Ascending aorta (tissue), 2 donors: ENCODE measurements at regions of chr15 and their contacts with region 1.

Region 1: DNA sequence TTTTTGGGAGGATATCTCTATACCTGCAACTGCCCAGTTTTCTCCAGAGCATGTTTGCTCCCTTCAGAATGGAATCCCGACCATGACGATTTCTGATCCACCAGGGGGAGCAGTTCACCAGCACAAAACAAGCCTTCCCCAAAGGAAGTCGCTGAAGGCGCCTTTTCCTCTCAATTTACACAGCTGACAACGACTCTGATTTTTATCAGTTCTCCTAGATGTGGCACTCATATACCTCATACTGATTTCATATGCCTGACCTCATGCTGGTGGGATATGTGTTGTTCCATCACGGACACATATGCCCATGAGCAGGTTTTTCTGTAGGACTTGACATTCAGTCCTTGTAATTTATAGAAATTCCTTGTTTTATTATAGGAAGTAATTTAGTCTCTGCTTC is 1028.2 kb downstream of the MCTP2 start:
- DNase-seq: peak in 1 of 2 donors; percentile 82
- H3K4me3 ChIP-seq: peak overlapping the region in 1 of 2 donors; percentile 37
- H3K27ac ChIP-seq: peak overlapping the region; percentile 73 to 88
- H3K4me1 ChIP-seq: peaks cover 0 to 29% of the 10 kb centered on the region in 2 donors
- H3K27me3 ChIP-seq: no peaks in the 10 kb centered on the region
- CTCF ChIP-seq: peak; percentile 60 to 81 (median 68)

Region 2: DNA sequence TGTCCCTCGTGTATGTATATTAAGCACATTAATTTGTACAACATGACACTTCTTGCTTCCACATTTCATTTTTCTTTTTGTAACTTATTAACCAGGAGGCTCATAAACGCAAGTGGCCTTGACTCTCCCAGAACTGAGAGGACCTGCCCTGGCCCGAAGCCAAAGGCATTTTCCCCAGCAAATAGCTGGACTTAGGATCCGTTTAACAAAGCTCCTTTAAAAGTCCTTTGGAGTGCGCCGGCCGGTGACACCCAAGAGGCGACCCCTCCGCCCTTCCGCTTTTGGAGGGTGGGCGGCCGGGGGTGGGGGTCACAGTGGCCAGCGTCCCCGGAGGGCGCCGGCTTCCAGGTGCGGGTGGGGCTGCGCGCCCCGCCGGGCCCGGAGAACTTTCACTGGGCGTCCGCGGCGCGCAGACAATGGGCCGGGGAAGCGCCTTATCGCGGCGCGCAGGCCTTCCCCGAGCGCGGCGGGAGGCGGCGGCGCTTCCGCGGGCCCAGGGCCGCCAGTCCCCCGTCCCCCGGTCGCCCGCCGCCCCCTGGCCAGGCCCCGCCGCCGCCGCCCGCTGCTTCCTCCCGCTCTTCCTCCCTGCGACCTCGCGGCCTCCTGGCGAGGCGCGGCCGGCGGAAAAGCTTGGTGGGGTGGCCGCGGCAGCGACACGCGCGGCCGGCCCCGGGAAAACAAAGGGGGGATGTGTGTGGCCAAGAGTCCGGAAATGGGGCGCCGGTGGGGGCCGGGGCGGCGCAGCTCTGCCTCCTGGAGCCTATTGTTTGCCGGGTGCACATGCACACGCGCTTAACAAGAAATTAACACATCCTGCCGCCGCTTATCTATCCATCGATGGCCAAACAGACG is 414.7 kb before region 1 on chr15:
- intact Hi-C with region 1: loop called (anchors 10 kb)
- DNase-seq: peak in 1 of 2 donors; percentile 77
- H3K4me3 ChIP-seq: peak overlapping the region; percentile 53 to 69
- H3K27ac ChIP-seq: peak overlapping the region; percentile 88 to 92
- H3K4me1 ChIP-seq: peaks cover 5 to 22% of the 10 kb centered on the region in 2 donors
- H3K27me3 ChIP-seq: no peaks in the 10 kb centered on the region
- CTCF ChIP-seq: peak in 2 of 3 experiments; percentile 15 to 37

Region 3: DNA sequence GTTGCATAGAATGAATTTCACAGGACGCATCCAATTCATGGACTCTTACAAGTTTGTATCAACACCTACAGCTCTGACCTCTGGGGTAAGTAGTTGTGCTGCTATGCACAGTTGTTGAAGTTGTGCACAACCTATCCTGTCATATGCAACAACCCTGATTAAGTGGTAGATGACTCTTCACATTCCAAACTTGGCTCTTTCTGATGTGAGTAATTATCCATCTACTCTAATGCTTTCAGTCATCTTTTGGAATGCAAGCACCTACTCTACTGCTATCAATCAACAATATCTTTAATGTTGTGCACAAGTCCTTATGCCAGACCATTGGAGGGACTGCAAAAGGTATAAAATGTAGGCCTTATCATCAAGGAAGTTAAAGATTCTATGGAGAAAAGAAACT is 106.8 kb before region 1 on chr15:
- intact Hi-C with region 1: no loop called
- DNase-seq: no peak
- H3K4me3 ChIP-seq: no peak overlapping the region
- H3K27ac ChIP-seq: no peak overlapping the region
- H3K4me1 ChIP-seq: no peaks in the 10 kb centered on the region
- H3K27me3 ChIP-seq: no peaks in the 10 kb centered on the region
- CTCF ChIP-seq: no peak

Region 4: DNA sequence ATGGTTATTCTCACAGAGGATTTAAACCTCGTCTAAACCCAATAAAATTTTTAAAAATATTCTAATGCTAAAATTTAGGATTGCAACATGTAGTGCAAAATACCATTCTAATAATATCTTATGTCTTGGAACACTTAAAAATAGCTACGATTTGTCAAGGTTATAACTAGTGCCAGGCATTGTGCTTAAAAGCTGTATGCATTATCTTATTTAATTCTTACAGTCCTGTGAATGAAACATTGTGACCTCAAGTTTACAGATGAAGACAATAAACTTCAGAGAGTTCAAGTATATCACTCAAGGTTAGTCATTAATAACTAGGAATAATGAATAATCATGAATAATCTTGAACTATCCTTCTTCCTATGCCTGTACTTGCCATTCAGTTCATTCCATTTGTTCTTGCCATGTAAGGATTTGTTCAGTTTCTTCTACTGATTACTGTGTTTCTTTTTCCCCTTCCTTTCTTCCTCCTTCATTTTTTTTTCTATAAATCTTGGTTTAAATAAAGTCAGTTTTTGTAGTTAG is 173.4 kb after region 1 on chr15:
- intact Hi-C with region 1: loop called (anchors 5 kb)
- DNase-seq: no peak
- H3K4me3 ChIP-seq: peak overlapping the region in 1 of 2 donors; percentile 4
- H3K27ac ChIP-seq: peak overlapping the region; percentile 82
- H3K4me1 ChIP-seq: peaks cover 7 to 14% of the 10 kb centered on the region in 2 donors
- H3K27me3 ChIP-seq: no peaks in the 10 kb centered on the region
- CTCF ChIP-seq: no peak

Region 5: GRCh38 chr15:95839367-95839782 is 579.9 kb after region 1 on chr15:
- intact Hi-C with region 1: loop called (anchors 1 kb)
- DNase-seq: no peak
- H3K4me3 ChIP-seq: no peak overlapping the region
- H3K27ac ChIP-seq: peak overlapping the region; percentile 51 to 94
- H3K4me1 ChIP-seq: peaks cover 0 to 4% of the 10 kb centered on the region in 2 donors
- H3K27me3 ChIP-seq: no peaks in the 10 kb centered on the region
- CTCF ChIP-seq: no peak

Region 6: GRCh38 chr15:96047255-96047931 is 787.9 kb after region 1 on chr15:
- intact Hi-C with region 1: loop called (anchors 10 kb)
- DNase-seq: peak in 1 of 2 donors; percentile 70
- H3K4me3 ChIP-seq: peak overlapping the region; percentile 12 to 14
- H3K27ac ChIP-seq: peak overlapping the region; percentile 17 to 36
- H3K4me1 ChIP-seq: peaks cover 0 to 13% of the 10 kb centered on the region in 2 donors
- H3K27me3 ChIP-seq: no peaks in the 10 kb centered on the region
- CTCF ChIP-seq: no peak

Region 7: GRCh38 chr15:96345560-96346399 is 1086.3 kb after region 1 on chr15:
- intact Hi-C with region 1: loop called (anchors 5 kb)
- DNase-seq: peak in 1 of 2 donors; percentile 84
- H3K4me3 ChIP-seq: peak overlapping the region; percentile 60 to 89
- H3K27ac ChIP-seq: peak overlapping the region; percentile 85 to 91
- H3K4me1 ChIP-seq: peaks cover 0 to 6% of the 10 kb centered on the region in 2 donors
- H3K27me3 ChIP-seq: no peaks in the 10 kb centered on the region
- CTCF ChIP-seq: peak; percentile 63 to 73 (median 71)